ENCODE measurements at regions of chr12 and their contacts with region 1.

Region 1: DNA sequence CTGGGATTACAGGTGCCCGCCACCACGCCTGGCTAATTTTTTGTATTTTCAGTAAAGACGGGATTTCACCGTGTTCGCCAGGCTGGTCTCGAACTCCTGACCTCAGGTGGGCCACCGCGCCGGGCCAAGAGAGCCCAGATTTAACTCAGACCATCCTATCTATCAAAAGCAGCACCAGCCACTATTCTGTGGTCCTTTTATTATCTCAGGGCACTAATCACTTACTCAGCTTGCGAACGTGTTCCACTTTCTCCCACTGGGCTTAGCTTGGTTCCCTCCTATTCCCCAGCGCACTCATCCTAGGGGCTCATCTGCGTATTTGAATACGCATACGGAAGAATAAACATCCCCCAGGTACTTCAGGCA is 16.2 kb upstream of the AACS start:
- DNase-seq: no peak
- ATAC-seq: no peak
- H3K4me3 Mint-ChIP-seq: peak overlapping the region; percentile 75
- H3K27ac Mint-ChIP-seq: no peak overlapping the region
- H3K4me1 Mint-ChIP-seq: peaks cover 8% of the 10 kb centered on the region
- H3K27me3 Mint-ChIP-seq: no peaks in the 10 kb centered on the region

Region 2: GRCh38 chr12:124754949-124755800 is 293.9 kb before region 1 on chr12:
- CTCF ChIA-PET with region 1: no interaction called
- POLR2A ChIA-PET with region 1: no interaction called
- intact Hi-C with region 1: no loop called
- DNase-seq: no peak
- ATAC-seq: peak; percentile 33
- H3K4me3 Mint-ChIP-seq: no peak overlapping the region
- H3K27ac Mint-ChIP-seq: no peak overlapping the region
- H3K4me1 Mint-ChIP-seq: peaks cover 7% of the 10 kb centered on the region
- H3K27me3 Mint-ChIP-seq: peaks cover 19% of the 10 kb centered on the region

Region 3: GRCh38 chr12:124940549-124941527 is 108.2 kb before region 1 on chr12:
- CTCF ChIA-PET with region 1: interaction called, 5 read pairs
- POLR2A ChIA-PET with region 1: no interaction called
- intact Hi-C with region 1: loop called in 1 of 2 experiments (anchors 1 kb)
- DNase-seq: peak; percentile 95
- ATAC-seq: peak; percentile 39
- H3K4me3 Mint-ChIP-seq: no peak overlapping the region
- H3K27ac Mint-ChIP-seq: no peak overlapping the region
- H3K4me1 Mint-ChIP-seq: peaks cover 11% of the 10 kb centered on the region
- H3K27me3 Mint-ChIP-seq: no peaks in the 10 kb centered on the region

Region 4: GRCh38 chr12:125065021-125065795 is 16.1 kb after region 1 on chr12 and contains the start of gene AACS:
- CTCF ChIA-PET with region 1: interaction called, 5 read pairs
- POLR2A ChIA-PET with region 1: interaction called, 7 read pairs
- intact Hi-C with region 1: loop called (anchors 1 kb)
- DNase-seq: peak; percentile 89
- ATAC-seq: peak; percentile 98
- H3K4me3 Mint-ChIP-seq: peak within 1 kb of the TSS; percentile 71
- H3K27ac Mint-ChIP-seq: peak within 1 kb of the TSS; percentile 37
- H3K4me1 Mint-ChIP-seq: peaks cover 13% of the 10 kb centered on the region
- H3K27me3 Mint-ChIP-seq: peaks cover 8% of the 10 kb centered on the region
- total RNA-seq, gene AACS: 13.9 to 16.6 TPM

Measured in activated CD4-positive, alpha-beta T cell treated with anti-CD3 and anti-CD28 coated beads for 36 hours (primary cell).